ENCODE measurements at regions of chr2 and their contacts with region 1.

Region 1: GRCh38 chr2:88950010-88950409 is 258.5 kb downstream of the RPIA start:
- DNase-seq: no peak
- ATAC-seq: no peak
- H3K4me3 Mint-ChIP-seq: no peak overlapping the region
- H3K27ac Mint-ChIP-seq: no peak overlapping the region
- H3K4me1 Mint-ChIP-seq: no peaks in the 10 kb centered on the region
- H3K27me3 Mint-ChIP-seq: peaks cover 6% of the 10 kb centered on the region

Region 2: GRCh38 chr2:88903749-88904353 is 46.2 kb before region 1 on chr2:
- CTCF ChIA-PET with region 1: interaction called, 4 read pairs
- POLR2A ChIA-PET with region 1: no interaction called
- intact Hi-C with region 1: loop called in 1 of 2 experiments (anchors 5 kb)
- DNase-seq: peak; percentile 9
- ATAC-seq: no peak
- H3K4me3 Mint-ChIP-seq: no peak overlapping the region
- H3K27ac Mint-ChIP-seq: no peak overlapping the region
- H3K4me1 Mint-ChIP-seq: no peaks in the 10 kb centered on the region
- H3K27me3 Mint-ChIP-seq: peaks cover 10% of the 10 kb centered on the region